ENCODE measurements at regions of chr22 and their contacts with region 1.

Region 1: GRCh38 chr22:21045585-21046294 is at the start of gene LRRC74B:
- DNase-seq: peak; percentile 83
- ATAC-seq: peak; percentile 93
- H3K4me3 ChIP-seq: peak within 1 kb of the TSS in 3 of 5 experiments; percentile 19 to 44 (median 34)
- H3K4me3 Mint-ChIP-seq: peak within 1 kb of the TSS; percentile 64
- H3K27ac ChIP-seq: no peak within 1 kb of the TSS
- H3K27ac Mint-ChIP-seq: peak within 1 kb of the TSS; percentile 70
- H3K4me1 ChIP-seq: peaks cover 23 to 24% of the 10 kb centered on the region in 2 donors
- H3K4me1 Mint-ChIP-seq: peaks cover 20% of the 10 kb centered on the region
- H3K27me3 ChIP-seq: peaks cover 0 to 30% (median 7%) of the 10 kb centered on the region in 4 experiments
- H3K27me3 Mint-ChIP-seq: peaks cover 23% of the 10 kb centered on the region
- CTCF ChIP-seq: no peak
- total RNA-seq, gene LRRC74B: 0.12 and 0.17 TPM in 2 replicates

Region 2: GRCh38 chr22:20981787-20982562 is 63.8 kb before region 1 on chr22 and contains the start of gene LZTR1:
- CTCF ChIA-PET with region 1: no interaction called
- POLR2A ChIA-PET with region 1: no interaction called
- intact Hi-C with region 1: loop called (anchors 10 kb)
- DNase-seq: peak; percentile 87
- ATAC-seq: peak; percentile 85
- H3K4me3 ChIP-seq: peak within 1 kb of the TSS; percentile 53 to 85 (median 77)
- H3K4me3 Mint-ChIP-seq: peak within 1 kb of the TSS; percentile 95
- H3K27ac ChIP-seq: peak within 1 kb of the TSS; percentile 75 to 79
- H3K27ac Mint-ChIP-seq: peak within 1 kb of the TSS; percentile 89
- H3K4me1 ChIP-seq: peaks cover 24 to 34% of the 10 kb centered on the region in 2 donors
- H3K4me1 Mint-ChIP-seq: peaks cover 36% of the 10 kb centered on the region
- H3K27me3 ChIP-seq: peaks cover 0 to 3% (median 0%) of the 10 kb centered on the region in 4 experiments
- H3K27me3 Mint-ChIP-seq: peaks cover 3% of the 10 kb centered on the region
- CTCF ChIP-seq: peak; percentile 51
- total RNA-seq, gene LZTR1: 94.8 and 104 TPM in 2 replicates

Region 3: DNA sequence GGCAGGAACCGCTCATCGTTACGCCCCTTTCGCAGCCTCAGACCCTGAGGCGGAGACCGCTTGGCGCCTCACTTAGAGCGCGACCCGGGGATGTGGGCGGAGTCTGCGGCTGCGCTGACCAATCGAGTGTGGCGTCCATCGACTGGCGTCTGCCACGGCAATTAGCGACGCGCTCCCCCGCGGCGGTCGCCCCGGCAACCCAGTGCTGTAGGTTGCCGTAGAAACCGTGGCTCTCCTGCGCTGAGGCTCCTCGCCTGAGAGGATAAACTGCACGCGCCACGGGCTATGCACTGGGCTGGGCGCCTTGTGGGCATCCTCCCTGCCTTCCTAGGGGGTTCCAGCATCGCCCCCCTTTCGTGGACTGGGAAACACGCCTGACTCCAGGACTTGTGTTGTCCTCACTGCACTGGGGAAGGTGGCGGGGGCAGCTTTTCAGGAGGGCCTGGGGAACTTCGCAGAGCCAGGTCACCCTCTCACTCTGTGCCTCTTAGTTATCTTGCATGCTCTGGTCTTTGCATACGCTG is 31.5 kb before region 1 on chr22:
- CTCF ChIA-PET with region 1: no interaction called
- POLR2A ChIA-PET with region 1: no interaction called
- intact Hi-C with region 1: loop called (anchors 1 kb)
- DNase-seq: peak; percentile 95
- ATAC-seq: peak; percentile 95
- H3K4me3 ChIP-seq: peak overlapping the region in 4 of 5 experiments; percentile 45 to 57 (median 52)
- H3K4me3 Mint-ChIP-seq: peak overlapping the region; percentile 94
- H3K27ac ChIP-seq: peak overlapping the region; percentile 73 to 74
- H3K27ac Mint-ChIP-seq: peak overlapping the region; percentile 91
- H3K4me1 ChIP-seq: peaks cover 14 to 24% of the 10 kb centered on the region in 2 donors
- H3K4me1 Mint-ChIP-seq: peaks cover 24% of the 10 kb centered on the region
- H3K27me3 ChIP-seq: no peaks in the 10 kb centered on the region
- H3K27me3 Mint-ChIP-seq: no peaks in the 10 kb centered on the region
- CTCF ChIP-seq: no peak

Region 4: GRCh38 chr22:21026783-21027611 is 18.7 kb before region 1 on chr22:
- CTCF ChIA-PET with region 1: no interaction called
- POLR2A ChIA-PET with region 1: no interaction called
- intact Hi-C with region 1: no loop called
- DNase-seq: no peak
- ATAC-seq: no peak
- H3K4me3 ChIP-seq: no peak overlapping the region
- H3K4me3 Mint-ChIP-seq: no peak overlapping the region
- H3K27ac ChIP-seq: no peak overlapping the region
- H3K27ac Mint-ChIP-seq: no peak overlapping the region
- H3K4me1 ChIP-seq: peaks cover under 1 to 3% of the 10 kb centered on the region in 2 donors
- H3K4me1 Mint-ChIP-seq: peaks cover 5% of the 10 kb centered on the region
- H3K27me3 ChIP-seq: peaks cover 0 to 17% (median 4%) of the 10 kb centered on the region in 4 experiments
- H3K27me3 Mint-ChIP-seq: peaks cover 27% of the 10 kb centered on the region
- CTCF ChIP-seq: no peak